Activated naive CD4-positive, alpha-beta T cell treated with anti-CD3 and anti-CD28 coated beads, Interleukin-2, amount 10 ng/mL, durations not matched to agents 7 days and 5 days (primary cell): ENCODE measurements at regions of chrX and their contacts with region 1.

Region 1: DNA sequence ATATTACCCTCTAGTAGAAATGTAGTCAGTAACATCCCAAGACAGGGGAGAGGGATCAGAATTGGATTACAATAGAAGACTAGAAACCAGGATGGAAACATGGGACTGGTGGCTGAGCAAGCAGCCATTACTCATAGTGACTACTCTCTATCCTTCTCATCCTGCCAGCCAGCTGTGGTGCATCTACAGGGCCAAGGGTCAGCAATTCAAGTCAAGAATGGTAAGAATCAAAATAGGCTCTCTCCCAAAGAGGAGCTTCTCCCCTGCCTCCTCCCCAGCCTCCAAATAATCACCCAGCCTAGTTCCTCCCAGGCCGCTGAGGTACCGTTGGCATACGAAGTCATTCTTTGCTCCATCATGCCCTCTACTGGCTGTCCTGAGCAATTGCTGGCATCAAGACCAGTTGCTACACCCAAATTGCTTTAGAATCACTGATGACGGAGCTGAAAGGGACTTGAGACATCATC is 19.4 kb downstream of the AWAT2 start:
- DNase-seq: peak; percentile 63
- H3K4me3 Mint-ChIP-seq: no peak overlapping the region
- H3K27ac Mint-ChIP-seq: no peak overlapping the region
- H3K4me1 Mint-ChIP-seq: peaks cover 71% of the 10 kb centered on the region
- H3K27me3 Mint-ChIP-seq: no peaks in the 10 kb centered on the region

Region 2: DNA sequence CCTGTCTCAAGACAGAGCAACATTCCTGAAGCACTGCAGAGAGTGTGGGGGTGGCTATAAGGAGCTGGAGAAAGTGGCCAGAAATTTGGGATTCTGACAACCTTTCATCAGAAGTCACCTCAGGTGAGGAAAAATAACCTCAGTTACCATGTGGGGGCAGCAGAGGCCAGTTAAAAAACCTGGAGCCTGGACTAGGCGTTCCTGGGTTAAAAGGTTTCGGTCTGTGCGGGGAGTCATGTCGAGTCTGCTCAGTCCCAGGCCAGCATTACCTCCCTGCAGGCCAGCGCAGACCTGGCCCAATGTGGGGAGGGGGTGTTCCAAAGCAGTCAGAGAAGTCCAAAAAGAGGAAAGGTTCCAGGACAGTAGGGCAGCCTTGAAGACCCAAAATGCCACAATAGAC is 537.1 kb before region 1 on chrX:
- CTCF ChIA-PET with region 1: interaction called, 11 read pairs
- DNase-seq: peak; percentile 63
- H3K4me3 Mint-ChIP-seq: no peak overlapping the region
- H3K27ac Mint-ChIP-seq: no peak overlapping the region
- H3K4me1 Mint-ChIP-seq: peaks cover 4% of the 10 kb centered on the region
- H3K27me3 Mint-ChIP-seq: peaks cover 29% of the 10 kb centered on the region

Region 3: GRCh38 chrX:69618803-69619202 is 411.5 kb before region 1 on chrX:
- CTCF ChIA-PET with region 1: interaction called, 10 read pairs
- DNase-seq: peak; percentile 39
- H3K4me3 Mint-ChIP-seq: peak overlapping the region; percentile 33
- H3K27ac Mint-ChIP-seq: no peak overlapping the region
- H3K4me1 Mint-ChIP-seq: peaks cover 39% of the 10 kb centered on the region
- H3K27me3 Mint-ChIP-seq: peaks cover 13% of the 10 kb centered on the region

Region 4: GRCh38 chrX:70016513-70016912 is 13.8 kb before region 1 on chrX:
- CTCF ChIA-PET with region 1: no interaction called
- DNase-seq: no peak
- H3K4me3 Mint-ChIP-seq: peak overlapping the region; percentile 22
- H3K27ac Mint-ChIP-seq: peak overlapping the region; percentile 89
- H3K4me1 Mint-ChIP-seq: peaks cover 52% of the 10 kb centered on the region
- H3K27me3 Mint-ChIP-seq: peaks cover 4% of the 10 kb centered on the region

Region 5: GRCh38 chrX:70096052-70096451 is 65.7 kb after region 1 on chrX:
- CTCF ChIA-PET with region 1: interaction called, 11 read pairs
- DNase-seq: peak; percentile 28
- H3K4me3 Mint-ChIP-seq: no peak overlapping the region
- H3K27ac Mint-ChIP-seq: no peak overlapping the region
- H3K4me1 Mint-ChIP-seq: peaks cover 2% of the 10 kb centered on the region
- H3K27me3 Mint-ChIP-seq: peaks cover 12% of the 10 kb centered on the region